Caco-2 (cell line): ENCODE measurements at regions of chr3 and their contacts with region 1.

Region 1: DNA sequence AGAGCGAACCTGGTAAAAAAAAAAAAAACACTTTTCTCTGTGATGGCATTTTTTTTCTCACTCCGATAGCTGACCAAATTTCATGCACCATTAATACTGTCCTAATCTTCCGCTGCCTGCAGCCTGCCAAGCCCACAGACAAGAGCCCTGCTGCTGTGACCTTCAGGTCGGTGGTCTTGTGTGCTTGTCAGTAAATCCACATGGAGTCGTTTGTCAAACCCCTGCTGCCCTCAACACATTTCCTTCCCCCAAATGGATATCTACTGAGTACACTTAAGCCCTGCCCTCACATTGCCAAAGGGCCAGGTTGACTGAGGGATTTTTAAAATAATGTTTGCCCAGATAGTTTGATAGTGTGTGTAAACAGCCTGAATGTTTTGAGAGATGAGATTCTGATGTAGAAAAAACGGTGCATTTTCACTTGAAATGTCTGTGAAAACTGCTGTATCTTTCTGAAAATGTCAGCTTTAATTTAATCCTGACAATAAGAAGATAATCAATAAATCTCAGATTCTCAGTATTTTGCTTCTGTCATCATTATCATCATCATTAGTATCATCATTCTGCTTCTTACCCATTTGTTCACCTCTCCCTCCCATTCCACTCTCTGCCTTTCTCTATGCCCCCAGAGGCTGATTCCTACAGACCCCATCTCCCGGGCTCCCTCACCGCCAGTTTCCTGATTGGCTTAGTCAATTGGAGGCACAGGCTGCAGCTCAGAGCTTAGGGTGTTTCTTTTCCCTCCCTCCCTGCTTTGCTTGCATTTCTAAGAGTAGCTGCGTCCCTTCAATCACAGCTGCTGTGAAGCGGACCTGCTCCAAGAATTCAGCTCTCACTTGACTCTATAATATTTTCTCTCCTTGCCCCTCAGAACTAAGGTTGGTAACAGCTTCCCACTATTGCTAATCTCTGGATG is 8.3 kb upstream of the SNTN start:
- DNase-seq: no peak
- H3K4me3 ChIP-seq: peak overlapping the region; percentile 39; the same call in 1 of the 2 replicates
- H3K4me3 Mint-ChIP-seq: peak overlapping the region; percentile 86
- H3K27ac Mint-ChIP-seq: no peak overlapping the region
- H3K4me1 ChIP-seq: no peaks in the 10 kb centered on the region
- H3K4me1 Mint-ChIP-seq: peaks cover 14% of the 10 kb centered on the region
- H3K27me3 ChIP-seq: no peaks in the 10 kb centered on the region
- H3K27me3 Mint-ChIP-seq: peaks cover 2% of the 10 kb centered on the region
- CTCF ChIP-seq: no peak

Region 2: GRCh38 chr3:63442918-63443317 is 201.2 kb before region 1 on chr3:
- CTCF ChIA-PET with region 1: no interaction called
- POLR2A ChIA-PET with region 1: no interaction called
- intact Hi-C with region 1: no loop called
- DNase-seq: no peak
- H3K4me3 ChIP-seq: no peak overlapping the region
- H3K4me3 Mint-ChIP-seq: no peak overlapping the region
- H3K27ac Mint-ChIP-seq: no peak overlapping the region
- H3K4me1 ChIP-seq: 0 out of 2 replicates have a peak, but pooled peaks cover 3% of the 10 kb centered on the region
- H3K4me1 Mint-ChIP-seq: peaks cover 18% of the 10 kb centered on the region
- H3K27me3 ChIP-seq: no peaks in the 10 kb centered on the region
- H3K27me3 Mint-ChIP-seq: peaks cover 3% of the 10 kb centered on the region
- CTCF ChIP-seq: no peak

Region 3: GRCh38 chr3:63576901-63577335 is 67.2 kb before region 1 on chr3:
- CTCF ChIA-PET with region 1: no interaction called
- POLR2A ChIA-PET with region 1: no interaction called
- intact Hi-C with region 1: loop called (anchors 1 kb)
- DNase-seq: peak; percentile 65 to 83
- H3K4me3 ChIP-seq: no peak overlapping the region
- H3K4me3 Mint-ChIP-seq: peak overlapping the region; percentile 3
- H3K27ac Mint-ChIP-seq: peak overlapping the region; percentile 12
- H3K4me1 ChIP-seq: peaks cover 43% of the 10 kb centered on the region
- H3K4me1 Mint-ChIP-seq: peaks cover 25% of the 10 kb centered on the region
- H3K27me3 ChIP-seq: no peaks in the 10 kb centered on the region
- H3K27me3 Mint-ChIP-seq: no peaks in the 10 kb centered on the region
- CTCF ChIP-seq: no peak

Region 4: DNA sequence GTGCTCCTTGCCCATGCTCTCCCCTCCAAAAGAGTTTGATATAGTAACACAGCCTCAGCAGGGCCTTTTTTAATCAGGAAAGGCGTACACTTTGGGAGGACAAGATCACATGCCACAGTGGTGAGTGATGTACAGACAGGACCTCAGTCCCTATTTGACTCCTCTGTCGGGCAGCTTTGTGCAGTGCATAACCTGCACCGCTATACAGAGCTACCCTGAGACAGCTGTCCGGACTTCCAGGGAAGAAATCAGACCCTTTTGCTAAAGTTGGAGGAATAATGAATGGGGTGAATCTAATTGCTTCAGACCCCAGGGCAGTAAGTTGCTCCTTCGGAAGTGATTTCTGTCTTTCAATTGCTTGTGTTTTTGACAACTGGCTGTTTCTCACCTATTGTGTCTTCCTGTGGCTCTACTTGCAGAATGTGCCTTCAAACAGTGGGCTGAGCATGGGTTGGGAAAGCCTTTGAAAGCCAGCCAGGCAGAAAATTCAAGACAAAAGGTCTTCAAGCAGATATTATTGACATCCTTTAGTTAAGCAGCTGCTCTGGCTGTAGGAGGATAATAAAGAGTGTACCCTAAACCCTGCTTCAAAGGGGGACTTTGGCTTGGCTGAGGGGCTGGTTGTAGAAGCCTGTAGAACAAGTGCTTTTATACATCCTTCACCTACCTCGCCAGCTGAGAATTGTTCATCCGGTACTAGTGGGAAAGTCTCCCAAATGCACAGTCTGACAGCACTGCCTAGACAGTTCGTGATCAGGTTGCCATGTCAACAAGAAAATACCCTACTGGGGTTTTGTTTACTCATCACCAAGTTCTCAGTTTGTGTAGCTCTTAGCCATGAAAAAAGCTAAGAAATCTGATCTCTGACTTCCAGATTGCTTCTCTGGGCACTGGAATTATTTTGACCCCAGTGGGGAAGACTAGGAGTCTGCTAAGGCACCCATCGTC is 43.4 kb after region 1 on chr3:
- CTCF ChIA-PET with region 1: no interaction called
- POLR2A ChIA-PET with region 1: no interaction called
- intact Hi-C with region 1: no loop called
- DNase-seq: no peak
- H3K4me3 ChIP-seq: no peak overlapping the region
- H3K4me3 Mint-ChIP-seq: no peak overlapping the region
- H3K27ac Mint-ChIP-seq: no peak overlapping the region
- H3K4me1 ChIP-seq: no peaks in the 10 kb centered on the region
- H3K4me1 Mint-ChIP-seq: no peaks in the 10 kb centered on the region
- H3K27me3 ChIP-seq: no peaks in the 10 kb centered on the region
- H3K27me3 Mint-ChIP-seq: no peaks in the 10 kb centered on the region
- CTCF ChIP-seq: no peak